ENCODE measurements at regions of chr12 and their contacts with region 1.

Region 1: GRCh38 chr12:56518570-56518969 is 3.0 kb upstream of the RBMS2 start:
- DNase-seq: no peak
- ATAC-seq: no peak
- H3K4me3 ChIP-seq: no peak overlapping the region
- H3K27ac ChIP-seq: peak overlapping the region; percentile 83
- H3K4me1 ChIP-seq: peaks cover 49% of the 10 kb centered on the region
- H3K27me3 ChIP-seq: no peaks in the 10 kb centered on the region
- CTCF ChIP-seq: no peak

Region 2: DNA sequence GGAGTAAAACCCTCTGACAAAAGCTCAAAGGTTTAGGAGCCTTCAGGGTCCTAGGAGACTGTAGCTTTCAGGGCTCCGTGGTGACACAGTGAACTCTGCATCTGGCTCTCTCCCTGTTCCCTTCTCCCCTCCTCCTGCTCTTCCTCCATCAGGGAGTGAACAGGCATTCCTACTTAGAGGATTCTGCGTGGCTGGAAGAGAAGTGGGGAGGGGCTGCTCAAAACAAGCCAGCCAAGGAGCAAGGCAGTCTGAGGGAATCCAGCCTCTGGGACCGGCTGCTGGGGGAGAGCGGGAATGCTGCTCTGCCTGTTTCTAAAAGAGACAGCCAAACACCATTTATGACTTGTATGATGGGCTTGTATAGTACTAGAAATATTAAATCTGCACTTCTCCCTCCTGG is 52.6 kb after region 1 on chr12:
- intact Hi-C with region 1: loop called (anchors 5 kb)
- DNase-seq: no peak
- ATAC-seq: peak; percentile 24 to 31
- H3K4me3 ChIP-seq: peak overlapping the region; percentile 24
- H3K27ac ChIP-seq: peak overlapping the region; percentile 80
- H3K4me1 ChIP-seq: peaks cover 63% of the 10 kb centered on the region
- H3K27me3 ChIP-seq: no peaks in the 10 kb centered on the region
- CTCF ChIP-seq: no peak

Measured in lower lobe of right lung (tissue), 2 donors.